Upper lobe of right lung (tissue), 1 donor: ENCODE measurements at regions of chr14 and their contacts with region 1.

Region 1: GRCh38 chr14:89915114-89915878 is 39.2 kb downstream of the EFCAB11 start:
- DNase-seq: no peak
- ATAC-seq: peak; percentile 82
- H3K4me3 ChIP-seq: no peak overlapping the region
- H3K27ac ChIP-seq: no peak overlapping the region
- H3K4me1 ChIP-seq: no peaks in the 10 kb centered on the region
- H3K27me3 ChIP-seq: no peaks in the 10 kb centered on the region
- CTCF ChIP-seq: peak; percentile 95

Region 2: GRCh38 chr14:89033756-89034155 is 881.5 kb before region 1 on chr14:
- intact Hi-C with region 1: loop called (anchors 10 kb)
- DNase-seq: no peak
- ATAC-seq: peak; percentile 69
- H3K4me3 ChIP-seq: no peak overlapping the region
- H3K27ac ChIP-seq: no peak overlapping the region
- H3K4me1 ChIP-seq: no peaks in the 10 kb centered on the region
- H3K27me3 ChIP-seq: no peaks in the 10 kb centered on the region
- CTCF ChIP-seq: no peak